Mammary epithelial cell (primary cell): ENCODE measurements at regions of chr9 and their contacts with region 1.

Region 1: DNA sequence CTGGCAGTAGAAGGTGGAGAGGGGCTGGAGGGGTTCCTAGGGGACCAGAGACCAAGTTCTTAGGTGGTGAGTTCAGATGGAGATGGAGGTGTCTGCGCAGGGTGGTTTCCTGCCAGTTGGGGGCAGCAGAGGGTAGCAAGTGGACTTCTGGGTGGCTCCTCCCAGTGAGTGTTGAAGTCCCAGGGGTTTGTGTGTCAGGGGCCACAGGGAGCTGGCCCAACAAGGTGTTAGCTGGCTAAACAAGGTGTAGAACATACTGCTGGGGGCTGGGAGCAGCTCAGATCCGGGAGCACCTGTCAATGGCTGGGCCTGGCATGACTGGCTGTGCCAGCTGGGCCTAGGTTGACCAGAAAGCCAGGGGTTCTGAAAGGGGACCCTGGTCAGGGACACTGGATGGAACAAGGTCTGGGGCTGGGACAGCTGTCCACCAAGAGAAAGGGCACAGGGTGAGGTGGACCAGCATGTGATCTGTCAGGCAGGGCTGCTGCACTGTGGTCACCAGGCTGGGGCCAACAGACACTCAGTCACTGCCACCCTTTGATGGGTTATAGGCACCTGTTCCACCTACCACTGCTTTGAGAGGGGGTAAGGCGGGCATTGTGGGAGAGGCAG is 35.6 kb downstream of the DAB2IP start:
- DNase-seq: peak; percentile 57
- H3K4me3 ChIP-seq: no peak overlapping the region
- H3K27ac ChIP-seq: no peak overlapping the region
- H3K4me1 ChIP-seq: no peaks in the 10 kb centered on the region
- H3K27me3 ChIP-seq: no peaks in the 10 kb centered on the region
- CTCF ChIP-seq: peak; percentile 95 to 98

Region 2: DNA sequence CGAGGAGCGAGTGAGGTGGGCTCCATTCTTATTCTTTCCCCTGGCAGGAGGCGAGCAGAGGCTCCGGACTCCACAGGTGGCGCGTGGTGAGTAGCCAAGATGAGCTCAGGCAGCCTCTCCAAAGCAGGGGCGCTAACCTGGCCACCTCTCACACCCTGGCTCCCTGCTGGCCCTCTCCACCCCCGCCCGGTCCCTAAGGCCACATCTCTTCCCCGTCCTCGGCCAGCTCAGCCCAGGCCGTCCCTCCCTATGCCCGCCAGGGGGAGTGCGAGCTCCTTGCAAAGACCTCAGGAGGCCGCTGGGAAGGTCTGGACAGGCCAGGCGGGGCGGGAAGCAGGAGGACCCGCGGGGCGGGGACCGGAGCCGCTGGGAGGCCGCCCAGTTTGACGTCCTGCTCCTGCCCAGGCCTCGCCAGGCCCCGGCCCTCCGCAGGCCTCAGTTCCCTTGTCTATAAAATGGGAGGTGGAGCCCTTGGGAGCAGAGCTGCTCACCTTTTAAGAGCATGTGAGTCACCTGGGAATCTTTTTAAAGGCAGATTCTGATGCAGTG is 141.1 kb before region 1 on chr9:
- CTCF ChIA-PET with region 1: interaction called, 5 read pairs
- dilution Hi-C with region 1: no loop called
- in situ Hi-C with region 1: loop called (anchors 10 kb)
- intact Hi-C with region 1: loop called (anchors 1 kb)
- DNase-seq: peak; percentile 93
- H3K4me3 ChIP-seq: no peak overlapping the region
- H3K27ac ChIP-seq: no peak overlapping the region
- H3K4me1 ChIP-seq: peaks cover 13% of the 10 kb centered on the region
- H3K27me3 ChIP-seq: no peaks in the 10 kb centered on the region
- CTCF ChIP-seq: peak; percentile 87 to 98

Region 3: GRCh38 chr9:121621113-121621449 is 66.0 kb before region 1 on chr9:
- CTCF ChIA-PET with region 1: interaction called, 7 read pairs
- dilution Hi-C with region 1: no loop called
- in situ Hi-C with region 1: no loop called
- intact Hi-C with region 1: loop called (anchors 5 kb)
- DNase-seq: no peak
- H3K4me3 ChIP-seq: no peak overlapping the region
- H3K27ac ChIP-seq: no peak overlapping the region
- H3K4me1 ChIP-seq: no peaks in the 10 kb centered on the region
- H3K27me3 ChIP-seq: peaks cover 1% of the 10 kb centered on the region
- CTCF ChIP-seq: peak; percentile 28 to 58

Region 4: GRCh38 chr9:121718082-121718856 is 31.2 kb after region 1 on chr9:
- CTCF ChIA-PET with region 1: interaction called, 11 read pairs
- dilution Hi-C with region 1: no loop called
- in situ Hi-C with region 1: no loop called
- intact Hi-C with region 1: loop called (anchors 1 kb)
- DNase-seq: peak; percentile 79
- H3K4me3 ChIP-seq: no peak overlapping the region
- H3K27ac ChIP-seq: peak overlapping the region; percentile 88
- H3K4me1 ChIP-seq: peaks cover 73% of the 10 kb centered on the region
- H3K27me3 ChIP-seq: no peaks in the 10 kb centered on the region
- CTCF ChIP-seq: no peak

Region 5: DNA sequence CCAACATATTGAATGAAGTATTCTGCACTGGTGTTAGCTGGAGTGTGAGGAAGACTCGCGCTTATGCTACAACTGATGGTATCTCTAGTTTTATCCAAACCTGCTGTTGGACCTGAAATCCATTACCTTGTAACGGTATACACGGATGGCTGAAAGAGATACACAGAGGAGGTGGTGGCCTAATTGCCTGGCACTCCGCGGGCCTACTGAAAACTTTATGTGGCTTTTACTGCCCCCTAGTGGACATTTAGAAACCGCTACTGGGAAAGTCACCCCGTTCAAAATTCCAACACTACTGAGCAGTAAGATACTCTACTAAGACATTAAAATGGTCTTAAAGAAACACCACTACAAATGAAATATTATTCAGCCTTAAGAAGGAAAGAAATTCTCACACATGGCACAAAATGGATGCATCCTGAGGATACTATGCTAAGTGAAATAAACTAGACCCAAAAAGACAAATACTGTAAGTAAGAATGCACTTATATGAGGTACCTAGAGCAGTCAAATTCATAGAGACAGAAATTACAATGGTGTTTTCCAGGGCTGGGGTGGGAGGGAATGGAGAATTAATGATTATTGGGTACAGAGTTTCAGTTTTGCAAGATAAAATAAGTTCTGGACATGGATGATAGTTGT is 305.7 kb after region 1 on chr9:
- CTCF ChIA-PET with region 1: no interaction called
- dilution Hi-C with region 1: no loop called
- in situ Hi-C with region 1: loop called (anchors 5 kb)
- intact Hi-C with region 1: loop called (anchors 1 kb)
- DNase-seq: peak; percentile 60
- H3K4me3 ChIP-seq: no peak overlapping the region
- H3K27ac ChIP-seq: no peak overlapping the region
- H3K4me1 ChIP-seq: no peaks in the 10 kb centered on the region
- H3K27me3 ChIP-seq: no peaks in the 10 kb centered on the region
- CTCF ChIP-seq: peak; percentile 65 to 75

Region 6: GRCh38 chr9:122005597-122005996 is 318.6 kb after region 1 on chr9:
- CTCF ChIA-PET with region 1: no interaction called
- dilution Hi-C with region 1: no loop called
- in situ Hi-C with region 1: no loop called
- intact Hi-C with region 1: loop called (anchors 1 kb)
- DNase-seq: peak; percentile 23
- H3K4me3 ChIP-seq: no peak overlapping the region
- H3K27ac ChIP-seq: no peak overlapping the region
- H3K4me1 ChIP-seq: no peaks in the 10 kb centered on the region
- H3K27me3 ChIP-seq: no peaks in the 10 kb centered on the region
- CTCF ChIP-seq: peak; percentile 59 to 72

Region 7: GRCh38 chr9:122125158-122125508 is 438.1 kb after region 1 on chr9:
- CTCF ChIA-PET with region 1: no interaction called
- dilution Hi-C with region 1: no loop called
- in situ Hi-C with region 1: no loop called
- intact Hi-C with region 1: loop called (anchors 2 kb)
- DNase-seq: peak; percentile 70
- H3K4me3 ChIP-seq: no peak overlapping the region
- H3K27ac ChIP-seq: no peak overlapping the region
- H3K4me1 ChIP-seq: peaks cover 22% of the 10 kb centered on the region
- H3K27me3 ChIP-seq: no peaks in the 10 kb centered on the region
- CTCF ChIP-seq: peak; percentile 90 to 99